ENCODE measurements at regions of chr10 and their contacts with region 1.

Region 1: DNA sequence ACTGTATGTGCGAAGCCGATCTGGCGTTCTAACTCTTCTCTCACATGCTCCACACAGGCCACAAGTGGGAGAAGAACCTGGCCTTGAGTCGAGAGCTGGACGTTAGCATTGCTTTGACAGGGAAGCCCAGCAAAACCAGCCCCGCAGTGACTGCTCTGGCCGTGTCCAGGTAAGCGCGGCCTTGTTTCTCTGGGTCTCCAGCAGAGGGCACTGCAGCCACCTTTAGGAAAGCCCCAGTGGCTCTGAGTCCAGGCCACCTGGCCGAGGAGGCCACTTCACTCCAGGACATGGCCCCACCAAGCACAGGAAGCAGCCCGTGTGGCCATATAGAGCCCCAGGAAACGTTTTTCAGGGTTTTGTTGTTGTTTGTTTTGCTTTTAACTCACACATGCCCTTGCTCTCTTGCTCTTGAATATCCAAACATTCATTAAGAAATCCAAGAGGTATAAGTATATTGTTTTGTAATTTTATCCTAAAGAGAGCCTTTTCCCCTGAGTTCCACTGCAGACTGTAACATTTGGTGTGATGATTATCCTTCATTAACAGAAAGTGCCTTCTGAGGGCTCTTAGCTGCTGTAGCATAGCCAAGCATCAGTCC is 41.8 kb upstream of the LRRC18 start:
- DNase-seq: peak; percentile 10 to 24 (median 23)
- H3K4me3 ChIP-seq: no peak overlapping the region
- H3K4me3 Mint-ChIP-seq: no peak overlapping the region
- H3K27ac ChIP-seq: no peak overlapping the region
- H3K27ac Mint-ChIP-seq: peak overlapping the region in 1 of 7 donors; percentile 48
- H3K4me1 ChIP-seq: no peaks in the 10 kb centered on the region
- H3K4me1 Mint-ChIP-seq: no peaks in the 10 kb centered on the region
- H3K27me3 ChIP-seq: no peaks in the 10 kb centered on the region
- H3K27me3 Mint-ChIP-seq: no peaks in the 10 kb centered on the region
- CTCF ChIP-seq: peak; percentile 85

Region 2: GRCh38 chr10:49419005-49419404 is 437.6 kb after region 1 on chr10:
- intact Hi-C with region 1: loop called in 1 of 2 experiments (anchors 10 kb)
- DNase-seq: no peak
- H3K4me3 ChIP-seq: no peak overlapping the region
- H3K4me3 Mint-ChIP-seq: no peak overlapping the region
- H3K27ac ChIP-seq: no peak overlapping the region
- H3K27ac Mint-ChIP-seq: peak overlapping the region in 1 of 7 donors; percentile 28
- H3K4me1 ChIP-seq: no peaks in the 10 kb centered on the region
- H3K4me1 Mint-ChIP-seq: peaks cover 4% of the 10 kb centered on the region
- H3K27me3 ChIP-seq: no peaks in the 10 kb centered on the region
- H3K27me3 Mint-ChIP-seq: peaks cover 0 to 5% (median 1%) of the 10 kb centered on the region in 3 donors
- CTCF ChIP-seq: no peak

Region 3: DNA sequence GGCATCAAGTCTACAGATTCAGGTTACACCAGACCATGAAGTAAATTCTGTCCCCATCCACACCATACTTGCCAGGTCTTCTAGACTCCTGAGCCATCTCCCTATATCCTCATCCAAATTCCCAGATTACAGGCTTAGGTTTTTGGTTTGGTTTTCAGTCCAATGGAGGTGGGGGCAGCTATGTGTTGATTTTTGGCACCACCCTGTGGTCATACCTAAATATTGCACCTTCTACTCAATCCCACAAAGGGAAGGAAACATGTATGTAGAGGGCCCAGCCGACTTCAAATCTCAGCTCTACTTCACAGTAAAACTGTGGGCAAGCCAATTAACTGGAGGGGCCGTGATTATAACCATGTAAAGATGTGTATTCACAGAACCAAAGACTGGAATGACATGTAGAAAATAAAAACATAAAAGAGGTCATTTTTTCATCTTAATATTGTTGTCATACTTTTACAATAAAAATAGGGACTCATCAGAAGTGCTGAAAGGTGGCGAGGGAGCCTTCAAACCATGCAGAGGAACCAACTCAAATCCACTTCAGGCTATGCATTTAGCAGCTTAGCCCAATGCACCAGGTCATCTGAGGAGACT is 537.7 kb after region 1 on chr10:
- intact Hi-C with region 1: loop called (anchors 5 kb)
- DNase-seq: peak; percentile 26 to 45 (median 42)
- H3K4me3 ChIP-seq: no peak overlapping the region
- H3K4me3 Mint-ChIP-seq: no peak overlapping the region
- H3K27ac ChIP-seq: no peak overlapping the region
- H3K27ac Mint-ChIP-seq: peak overlapping the region in 1 of 7 donors; percentile 67
- H3K4me1 ChIP-seq: no peaks in the 10 kb centered on the region
- H3K4me1 Mint-ChIP-seq: peaks cover 9% of the 10 kb centered on the region
- H3K27me3 ChIP-seq: no peaks in the 10 kb centered on the region
- H3K27me3 Mint-ChIP-seq: peaks cover 0 to 2% (median 0%) of the 10 kb centered on the region in 3 donors
- CTCF ChIP-seq: peak; percentile 76